ENCODE measurements at regions of chr5 and their contacts with region 1.

Region 1: GRCh38 chr5:1641560-1642166 is 117.9 kb upstream of the LPCAT1 start:
- DNase-seq: peak; percentile 91
- ATAC-seq: peak; percentile 66
- H3K4me3 ChIP-seq: no peak overlapping the region
- H3K27ac ChIP-seq: no peak overlapping the region
- H3K4me1 ChIP-seq: peaks cover 14% of the 10 kb centered on the region; the same call in 1 of the 2 replicates
- H3K27me3 ChIP-seq: peaks cover 25% of the 10 kb centered on the region
- CTCF ChIP-seq: peak; percentile 98

Region 2: DNA sequence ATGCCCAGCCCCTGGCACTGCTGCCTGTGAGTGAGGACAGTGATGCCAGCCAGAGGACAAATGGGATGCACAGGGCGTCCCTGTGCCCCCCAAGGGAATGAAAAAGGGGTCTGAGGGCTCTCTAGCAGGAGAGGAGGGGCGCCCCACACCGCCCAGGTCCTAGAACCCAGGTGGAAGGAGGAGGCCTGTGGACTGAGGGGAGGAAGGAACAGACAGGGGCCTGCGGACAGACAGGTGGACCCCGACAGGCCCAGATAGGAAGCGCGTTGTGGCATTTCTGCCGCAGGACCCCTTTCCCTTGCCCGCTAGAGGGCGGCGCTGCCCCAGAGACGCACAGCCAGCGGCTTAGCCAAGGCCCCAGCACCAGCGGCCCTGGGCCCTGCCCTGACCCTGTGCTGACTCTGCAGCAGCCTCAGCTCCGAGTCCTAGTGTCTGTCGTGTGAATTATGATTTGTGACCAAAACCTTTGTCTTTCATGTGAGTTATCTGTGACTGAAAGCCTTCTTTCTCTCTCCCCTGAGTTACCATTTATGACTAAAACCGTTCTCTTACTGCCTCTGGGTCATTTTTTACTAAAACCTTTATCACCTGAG is 718.3 kb before region 1 on chr5:
- CTCF ChIA-PET with region 1: no interaction called
- POLR2A ChIA-PET with region 1: no interaction called
- intact Hi-C with region 1: loop called (anchors 10 kb)
- DNase-seq: peak; percentile 72
- ATAC-seq: peak; percentile 95
- H3K4me3 ChIP-seq: no peak overlapping the region
- H3K27ac ChIP-seq: no peak overlapping the region
- H3K4me1 ChIP-seq: no peaks in the 10 kb centered on the region
- H3K27me3 ChIP-seq: no peaks in the 10 kb centered on the region
- CTCF ChIP-seq: peak; percentile 85

Region 3: GRCh38 chr5:1167728-1168709 is 473.6 kb before region 1 on chr5:
- CTCF ChIA-PET with region 1: interaction called, 3 read pairs
- POLR2A ChIA-PET with region 1: no interaction called
- intact Hi-C with region 1: loop called (anchors 1 kb)
- DNase-seq: peak; percentile 84
- ATAC-seq: peak; percentile 92
- H3K4me3 ChIP-seq: peak overlapping the region; percentile 65
- H3K27ac ChIP-seq: no peak overlapping the region
- H3K4me1 ChIP-seq: peaks cover 7% of the 10 kb centered on the region; the same call in 1 of the 2 replicates
- H3K27me3 ChIP-seq: no peaks in the 10 kb centered on the region
- CTCF ChIP-seq: peak; percentile 81

Region 4: GRCh38 chr5:1344975-1345838 is 296.5 kb before region 1 on chr5 and contains the start of gene CLPTM1L:
- CTCF ChIA-PET with region 1: no interaction called
- POLR2A ChIA-PET with region 1: no interaction called
- intact Hi-C with region 1: loop called (anchors 5 kb)
- DNase-seq: peak; percentile 91
- ATAC-seq: peak; percentile 88
- H3K4me3 ChIP-seq: peak within 1 kb of the TSS; percentile 100
- H3K27ac ChIP-seq: no peak within 1 kb of the TSS; the same call in 1 of the 2 replicates
- H3K4me1 ChIP-seq: peaks cover 11% of the 10 kb centered on the region
- H3K27me3 ChIP-seq: no peaks in the 10 kb centered on the region
- CTCF ChIP-seq: no peak
- total RNA-seq, gene CLPTM1L: 373 and 463 TPM in 2 replicates

Region 5: GRCh38 chr5:1479581-1480188 is 162.0 kb before region 1 on chr5:
- CTCF ChIA-PET with region 1: no interaction called
- POLR2A ChIA-PET with region 1: no interaction called
- intact Hi-C with region 1: loop called (anchors 5 kb)
- DNase-seq: peak; percentile 35
- ATAC-seq: peak; percentile 25; the same call in 1 of the 2 replicates
- H3K4me3 ChIP-seq: no peak overlapping the region
- H3K27ac ChIP-seq: no peak overlapping the region
- H3K4me1 ChIP-seq: no peaks in the 10 kb centered on the region
- H3K27me3 ChIP-seq: no peaks in the 10 kb centered on the region
- CTCF ChIP-seq: peak; percentile 78

Region 6: DNA sequence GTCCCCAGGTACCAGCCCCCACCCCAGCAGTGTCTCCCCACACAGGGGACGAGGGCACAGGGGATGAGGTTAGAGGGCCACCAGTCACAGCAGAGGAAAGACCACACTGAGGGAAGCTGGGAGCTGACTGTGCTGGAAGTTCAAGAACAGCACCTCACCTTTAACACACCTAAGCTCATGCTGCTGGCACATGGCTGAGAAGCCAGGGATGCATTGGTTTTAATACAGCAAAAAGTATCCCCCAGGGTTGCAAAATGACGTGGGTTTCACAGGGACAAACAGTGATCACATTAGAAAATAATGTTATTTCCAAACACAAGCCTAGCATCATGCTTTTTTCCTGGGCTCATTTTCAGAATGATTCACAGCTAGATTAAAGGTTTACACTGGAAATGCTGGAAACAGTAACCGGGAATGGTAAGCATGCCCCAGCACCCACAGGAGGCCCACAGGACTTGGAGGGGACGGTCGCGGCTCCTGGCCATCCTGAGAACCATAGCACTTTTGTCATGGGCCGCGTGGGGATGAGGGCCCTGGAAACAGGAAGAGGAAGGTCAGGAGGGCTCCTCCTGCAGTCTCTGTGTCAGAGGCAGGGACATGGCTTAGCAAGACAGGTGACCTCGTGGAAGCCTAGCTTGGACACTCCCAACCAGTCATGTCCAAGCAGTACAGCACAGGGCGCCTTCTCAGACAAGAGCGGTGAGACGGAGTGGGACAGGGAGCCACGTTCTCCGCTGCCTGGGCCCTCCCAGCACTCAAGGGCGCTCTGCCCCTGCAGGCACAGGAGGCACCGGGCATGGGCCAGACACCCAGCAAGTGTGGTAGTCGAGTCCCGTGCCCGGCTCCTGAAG is 124.7 kb before region 1 on chr5:
- CTCF ChIA-PET with region 1: interaction called, 3 read pairs
- POLR2A ChIA-PET with region 1: no interaction called
- intact Hi-C with region 1: loop called (anchors 2 kb)
- DNase-seq: peak; percentile 87
- ATAC-seq: peak; percentile 40
- H3K4me3 ChIP-seq: peak overlapping the region; percentile 21; the same call in 1 of the 2 replicates
- H3K27ac ChIP-seq: peak overlapping the region; percentile 97
- H3K4me1 ChIP-seq: peaks cover 83% of the 10 kb centered on the region
- H3K27me3 ChIP-seq: no peaks in the 10 kb centered on the region
- CTCF ChIP-seq: no peak

Measured in PC-3 (cell line).